ENCODE measurements at regions of chr19 and their contacts with region 1.

Region 1: GRCh38 chr19:39539519-39540332 is at the start of gene EID2:
- DNase-seq: peak; percentile 97
- CTCF ChIP-seq: peak; percentile 85

Region 2: GRCh38 chr19:39661565-39661964 is 121.8 kb after region 1 on chr19:
- in situ Hi-C with region 1: loop called (anchors 5 kb)
- DNase-seq: no peak
- CTCF ChIP-seq: no peak